Activated T-helper 2 cell treated with anti-CD3 and anti-CD28 coated beads, Interferon-gamma antibody, Interleukin-2, Interleukin-4, amounts not matched to agents 10 μg/mL and 5 μg/mL and 100 μg/mL, durations not matched to agents 14 hours and 24 hours and 36 hours (primary cell): ENCODE measurements at regions of chr6 and their contacts with region 1.

Region 1: DNA sequence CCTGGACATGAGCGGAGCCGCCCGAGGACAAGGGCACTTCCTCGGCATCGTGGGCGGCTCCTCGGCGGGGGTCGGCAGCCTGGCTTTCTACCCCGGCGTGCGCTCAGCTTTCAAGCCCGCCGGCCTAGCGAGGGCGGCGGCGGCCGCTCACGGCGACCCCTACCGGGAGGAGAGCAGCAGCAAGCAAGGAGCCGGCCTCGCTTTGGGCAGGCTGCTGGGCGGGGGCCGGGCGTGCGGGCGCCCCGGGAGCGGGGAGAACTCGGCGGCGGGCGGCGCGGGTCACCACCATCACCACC is 6.7 kb downstream of the PRDM13 start:
- DNase-seq: no peak
- H3K4me3 Mint-ChIP-seq: no peak overlapping the region
- H3K27ac Mint-ChIP-seq: no peak overlapping the region
- H3K4me1 Mint-ChIP-seq: peaks cover 28% of the 10 kb centered on the region
- H3K27me3 Mint-ChIP-seq: peaks cover 75% of the 10 kb centered on the region

Region 2: DNA sequence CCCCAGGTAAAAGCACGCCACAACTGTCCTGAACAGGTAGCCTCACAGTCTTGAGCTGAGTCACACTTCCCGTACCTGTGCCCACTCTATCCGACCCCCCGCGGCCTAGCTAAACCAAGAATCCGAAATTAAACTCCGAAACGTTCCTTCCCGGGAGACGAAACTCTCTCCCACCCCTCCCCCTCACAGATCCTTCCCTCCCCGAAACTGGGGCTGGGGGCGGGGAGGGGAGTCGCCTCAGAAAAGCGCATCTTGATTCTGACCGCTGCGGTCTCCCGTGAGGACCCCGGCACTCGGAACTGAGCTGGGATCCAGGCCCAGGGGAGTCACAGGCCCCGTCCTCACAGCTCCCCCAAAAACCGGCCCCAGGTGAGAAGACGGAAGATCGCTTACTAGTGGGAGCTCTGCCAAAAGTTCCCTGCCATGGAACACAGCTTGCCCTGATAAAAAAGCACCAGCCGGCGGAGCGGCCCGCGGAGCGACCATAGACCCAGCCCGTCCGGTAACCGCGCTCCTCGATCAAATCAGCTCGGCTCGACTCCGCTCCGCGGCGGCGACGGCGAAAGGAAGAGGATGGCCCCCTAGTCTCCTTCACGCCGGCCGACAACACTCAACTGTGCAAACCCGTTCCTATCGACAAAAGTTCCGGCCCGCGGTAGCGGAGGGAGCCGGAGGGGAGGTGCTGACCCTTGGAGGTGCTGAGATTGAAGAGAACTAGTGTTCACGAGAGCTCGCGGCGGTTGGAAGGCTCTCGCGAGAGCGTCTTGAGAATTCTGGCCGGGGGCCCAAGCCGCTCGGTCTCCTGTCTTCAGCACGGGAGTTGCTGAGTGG is 45.0 kb before region 1 on chr6 and contains the start of gene CCNC:
- intact Hi-C with region 1: no loop called
- DNase-seq: peak; percentile 88
- H3K4me3 Mint-ChIP-seq: peak within 1 kb of the TSS; percentile 98
- H3K27ac Mint-ChIP-seq: peak within 1 kb of the TSS; percentile 93
- H3K4me1 Mint-ChIP-seq: peaks cover 17% of the 10 kb centered on the region
- H3K27me3 Mint-ChIP-seq: peaks cover 2% of the 10 kb centered on the region
- total RNA-seq, gene CCNC: 49.2 and 52.1 TPM in 2 replicates

Region 3: DNA sequence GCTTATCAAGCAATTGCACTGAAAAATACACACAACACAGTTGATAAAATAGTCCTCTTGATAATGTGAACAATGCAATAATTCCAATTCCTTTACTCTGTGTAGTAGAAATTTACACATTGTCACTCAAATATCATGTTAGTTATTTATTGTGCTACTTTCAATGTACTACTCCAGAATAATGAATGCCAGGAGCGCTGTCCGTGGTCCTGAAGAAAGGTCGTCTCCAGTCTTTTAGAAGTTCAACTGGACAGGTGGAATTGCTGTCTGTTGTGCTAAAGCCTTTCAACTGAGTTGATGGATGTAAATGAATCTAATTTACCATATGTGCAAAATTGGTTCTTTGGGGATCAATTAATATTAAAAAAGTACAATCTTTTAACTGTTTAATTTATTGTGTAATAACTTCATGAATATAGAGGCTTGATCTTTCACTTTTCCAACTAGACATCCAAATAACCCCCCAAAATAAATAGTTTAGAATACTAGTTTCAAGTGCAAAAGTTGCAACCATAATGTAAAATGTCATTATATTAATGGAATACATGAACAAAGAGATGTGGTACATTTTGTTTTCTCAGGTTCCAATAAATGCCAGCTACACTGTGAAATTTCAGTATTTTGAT is 1783.3 kb after region 1 on chr6:
- intact Hi-C with region 1: loop called (anchors 5 kb)
- DNase-seq: peak; percentile 16
- H3K4me3 Mint-ChIP-seq: no peak overlapping the region
- H3K27ac Mint-ChIP-seq: no peak overlapping the region
- H3K4me1 Mint-ChIP-seq: no peaks in the 10 kb centered on the region
- H3K27me3 Mint-ChIP-seq: peaks cover 62% of the 10 kb centered on the region